Activated CD4-positive, alpha-beta T cell treated with anti-CD3 and anti-CD28 coated beads, Interleukin-2, amount 10 ng/mL, durations not matched to agents 24 days and 14 days (primary cell): ENCODE measurements at regions of chr6 and their contacts with region 1.

Region 1: GRCh38 chr6:130697995-130698535 is 129.1 kb upstream of the SMLR1 start:
- DNase-seq: peak; percentile 92
- H3K4me3 Mint-ChIP-seq: no peak overlapping the region
- H3K27ac Mint-ChIP-seq: no peak overlapping the region
- H3K4me1 Mint-ChIP-seq: peaks cover 28% of the 10 kb centered on the region
- H3K27me3 Mint-ChIP-seq: peaks cover 2% of the 10 kb centered on the region

Region 2: GRCh38 chr6:130322673-130323268 is 375.3 kb before region 1 on chr6:
- intact Hi-C with region 1: loop called (anchors 1 kb)
- DNase-seq: peak; percentile 85
- H3K4me3 Mint-ChIP-seq: no peak overlapping the region
- H3K27ac Mint-ChIP-seq: no peak overlapping the region
- H3K4me1 Mint-ChIP-seq: peaks cover 12% of the 10 kb centered on the region
- H3K27me3 Mint-ChIP-seq: peaks cover 21% of the 10 kb centered on the region

Region 3: GRCh38 chr6:130365166-130366106 is 332.6 kb before region 1 on chr6 and contains the start of gene TMEM200A:
- intact Hi-C with region 1: loop called (anchors 1 kb)
- DNase-seq: peak; percentile 86
- H3K4me3 Mint-ChIP-seq: peak within 1 kb of the TSS; percentile 77
- H3K27ac Mint-ChIP-seq: peak within 1 kb of the TSS; percentile 27
- H3K4me1 Mint-ChIP-seq: peaks cover 23% of the 10 kb centered on the region
- H3K27me3 Mint-ChIP-seq: peaks cover 47% of the 10 kb centered on the region
- total RNA-seq, gene TMEM200A: 1.3 and 1.6 TPM in 2 replicates

Region 4: DNA sequence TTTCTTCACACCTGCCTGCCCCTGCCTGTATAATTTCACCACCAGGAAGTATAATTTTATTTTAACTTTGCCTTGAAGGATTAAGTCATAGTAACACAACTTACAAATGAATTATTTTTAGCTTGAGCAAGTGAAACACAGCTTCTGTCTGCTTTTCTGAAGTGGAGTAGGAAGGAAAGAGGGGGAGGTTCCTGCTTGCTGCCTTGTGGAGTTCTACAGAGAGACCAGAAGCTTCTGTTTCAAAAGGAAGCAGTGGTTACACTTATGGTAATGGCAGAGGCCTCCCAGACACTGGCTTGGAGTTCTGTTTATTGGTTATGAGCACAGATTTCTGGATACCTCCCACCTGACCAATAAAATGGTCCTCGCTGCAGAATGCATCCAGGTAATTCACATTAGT is 172.7 kb before region 1 on chr6:
- intact Hi-C with region 1: no loop called
- DNase-seq: peak; percentile 74
- H3K4me3 Mint-ChIP-seq: peak overlapping the region; percentile 13
- H3K27ac Mint-ChIP-seq: peak overlapping the region; percentile 73
- H3K4me1 Mint-ChIP-seq: peaks cover 31% of the 10 kb centered on the region
- H3K27me3 Mint-ChIP-seq: no peaks in the 10 kb centered on the region

Region 5: GRCh38 chr6:130575971-130576370 is 122.1 kb before region 1 on chr6:
- intact Hi-C with region 1: loop called (anchors 5 kb)
- DNase-seq: peak; percentile 93
- H3K4me3 Mint-ChIP-seq: peak overlapping the region; percentile 75
- H3K27ac Mint-ChIP-seq: peak overlapping the region; percentile 74
- H3K4me1 Mint-ChIP-seq: peaks cover 41% of the 10 kb centered on the region
- H3K27me3 Mint-ChIP-seq: no peaks in the 10 kb centered on the region

Region 6: DNA sequence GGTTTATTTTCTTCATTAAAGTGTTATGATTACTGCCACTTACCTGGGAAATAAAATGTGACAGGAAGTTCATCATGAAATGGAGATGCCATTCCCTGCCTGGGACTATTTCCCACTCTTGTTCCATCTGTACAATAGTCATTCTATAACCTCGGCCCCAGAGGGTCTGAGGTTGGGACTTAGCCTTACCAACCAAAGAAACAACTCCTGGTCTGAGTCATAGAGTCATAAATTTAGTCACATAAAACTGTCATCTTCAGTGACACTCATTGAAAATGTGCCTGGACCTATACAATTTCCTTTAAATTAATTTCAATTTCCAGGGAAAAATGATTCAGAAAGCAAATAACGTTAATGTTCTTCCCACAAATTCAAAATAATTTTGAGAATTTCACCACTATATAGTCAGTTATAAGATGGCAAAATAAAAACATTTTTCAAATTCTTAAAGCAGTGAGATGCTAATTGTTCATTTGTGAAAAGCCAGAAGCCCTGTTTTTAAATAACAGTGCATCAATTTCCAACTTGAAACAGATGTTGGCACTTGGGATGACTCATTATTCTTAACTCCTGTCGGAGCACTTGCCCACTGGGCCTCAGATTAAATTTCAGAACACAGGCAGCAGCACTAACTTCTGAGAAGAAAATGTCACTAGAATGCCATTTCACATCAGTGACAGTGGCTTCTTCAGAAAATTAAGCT is 72.1 kb before region 1 on chr6:
- intact Hi-C with region 1: loop called (anchors 5 kb)
- DNase-seq: no peak
- H3K4me3 Mint-ChIP-seq: peak overlapping the region; percentile 7
- H3K27ac Mint-ChIP-seq: peak overlapping the region; percentile 75
- H3K4me1 Mint-ChIP-seq: peaks cover 19% of the 10 kb centered on the region
- H3K27me3 Mint-ChIP-seq: no peaks in the 10 kb centered on the region

Region 7: GRCh38 chr6:130843575-130844320 is 145.7 kb after region 1 on chr6:
- intact Hi-C with region 1: loop called (anchors 1 kb)
- DNase-seq: peak; percentile 78
- H3K4me3 Mint-ChIP-seq: no peak overlapping the region
- H3K27ac Mint-ChIP-seq: no peak overlapping the region
- H3K4me1 Mint-ChIP-seq: peaks cover 2% of the 10 kb centered on the region
- H3K27me3 Mint-ChIP-seq: no peaks in the 10 kb centered on the region